ENCODE measurements at regions of chr4 and their contacts with region 1.

Region 1: GRCh38 chr4:73891739-73892405 is 22.7 kb downstream of the CXCL1 start:
- DNase-seq: no peak
- ATAC-seq: no peak
- H3K4me3 ChIP-seq: no peak overlapping the region
- H3K27ac ChIP-seq: no peak overlapping the region
- H3K4me1 ChIP-seq: peaks cover 28% of the 10 kb centered on the region
- H3K27me3 ChIP-seq: no peaks in the 10 kb centered on the region
- CTCF ChIP-seq: no peak

Region 2: GRCh38 chr4:73718375-73719373 is 173.2 kb before region 1 on chr4:
- CTCF ChIA-PET with region 1: no interaction called
- POLR2A ChIA-PET with region 1: no interaction called
- intact Hi-C with region 1: no loop called
- DNase-seq: peak; percentile 72
- ATAC-seq: no peak
- H3K4me3 ChIP-seq: no peak overlapping the region
- H3K27ac ChIP-seq: peak overlapping the region; percentile 97
- H3K4me1 ChIP-seq: peaks cover 73% of the 10 kb centered on the region
- H3K27me3 ChIP-seq: no peaks in the 10 kb centered on the region
- CTCF ChIP-seq: no peak

Region 3: DNA sequence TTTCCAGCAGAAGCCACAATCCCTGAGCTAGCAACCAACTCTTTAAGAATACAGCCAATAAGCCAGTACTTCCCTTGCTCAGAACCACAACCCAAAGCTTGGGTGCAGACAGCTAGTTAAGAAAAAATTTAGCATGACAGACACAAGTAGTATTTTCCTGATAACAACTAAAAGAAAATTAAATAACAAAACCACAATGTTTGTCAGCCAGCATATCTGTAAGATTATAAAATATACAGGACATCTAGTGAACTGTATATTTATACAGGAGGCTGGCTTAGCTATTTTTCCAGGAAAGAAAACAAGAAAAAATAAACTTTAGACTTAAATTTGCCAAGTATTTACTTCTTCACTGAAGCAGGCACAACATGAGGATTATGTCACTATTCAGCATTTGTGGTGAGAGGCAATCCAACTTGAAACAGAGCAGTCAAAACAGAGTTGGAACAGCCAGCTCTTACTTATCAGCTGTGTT is 32.2 kb before region 1 on chr4:
- CTCF ChIA-PET with region 1: no interaction called
- POLR2A ChIA-PET with region 1: no interaction called
- intact Hi-C with region 1: no loop called
- DNase-seq: peak; percentile 36
- ATAC-seq: peak; percentile 21; the same call in 1 of the 2 replicates
- H3K4me3 ChIP-seq: no peak overlapping the region
- H3K27ac ChIP-seq: no peak overlapping the region
- H3K4me1 ChIP-seq: peaks cover 43% of the 10 kb centered on the region
- H3K27me3 ChIP-seq: no peaks in the 10 kb centered on the region
- CTCF ChIP-seq: no peak

Region 4: GRCh38 chr4:73917081-73917501 is 25.2 kb after region 1 on chr4:
- CTCF ChIA-PET with region 1: no interaction called
- POLR2A ChIA-PET with region 1: no interaction called
- intact Hi-C with region 1: loop called (anchors 2 kb)
- DNase-seq: peak; percentile 94
- ATAC-seq: peak; percentile 91
- H3K4me3 ChIP-seq: no peak overlapping the region
- H3K27ac ChIP-seq: peak overlapping the region; percentile 75
- H3K4me1 ChIP-seq: peaks cover 33% of the 10 kb centered on the region
- H3K27me3 ChIP-seq: no peaks in the 10 kb centered on the region
- CTCF ChIP-seq: no peak